ENCODE measurements at regions of chr19 and their contacts with region 1.

Region 1: GRCh38 chr19:15210323-15210781 is 9.6 kb upstream of the NOTCH3 start:
- DNase-seq: peak; percentile 75 to 94
- H3K4me3 ChIP-seq: no peak overlapping the region
- H3K27ac ChIP-seq: peak overlapping the region; percentile 71 to 81
- H3K4me1 ChIP-seq: peaks cover 6 to 37% of the 10 kb centered on the region in 2 donors
- H3K27me3 ChIP-seq: no peaks in the 10 kb centered on the region
- CTCF ChIP-seq: no peak

Region 2: GRCh38 chr19:15195371-15196334 is 14.7 kb before region 1 on chr19:
- intact Hi-C with region 1: loop called (anchors 2 kb)
- DNase-seq: peak; percentile 57 to 93
- H3K4me3 ChIP-seq: peak overlapping the region; percentile 58 to 69
- H3K27ac ChIP-seq: peak overlapping the region; percentile 96
- H3K4me1 ChIP-seq: peaks cover 0 to 35% of the 10 kb centered on the region in 2 donors
- H3K27me3 ChIP-seq: no peaks in the 10 kb centered on the region
- CTCF ChIP-seq: peak in 1 of 3 experiments; percentile 14